Activated B cell treated with CpG ODN at 0.5 μM for 24 hours (primary cell): ENCODE measurements at regions of chr16 and their contacts with region 1.

Region 1: DNA sequence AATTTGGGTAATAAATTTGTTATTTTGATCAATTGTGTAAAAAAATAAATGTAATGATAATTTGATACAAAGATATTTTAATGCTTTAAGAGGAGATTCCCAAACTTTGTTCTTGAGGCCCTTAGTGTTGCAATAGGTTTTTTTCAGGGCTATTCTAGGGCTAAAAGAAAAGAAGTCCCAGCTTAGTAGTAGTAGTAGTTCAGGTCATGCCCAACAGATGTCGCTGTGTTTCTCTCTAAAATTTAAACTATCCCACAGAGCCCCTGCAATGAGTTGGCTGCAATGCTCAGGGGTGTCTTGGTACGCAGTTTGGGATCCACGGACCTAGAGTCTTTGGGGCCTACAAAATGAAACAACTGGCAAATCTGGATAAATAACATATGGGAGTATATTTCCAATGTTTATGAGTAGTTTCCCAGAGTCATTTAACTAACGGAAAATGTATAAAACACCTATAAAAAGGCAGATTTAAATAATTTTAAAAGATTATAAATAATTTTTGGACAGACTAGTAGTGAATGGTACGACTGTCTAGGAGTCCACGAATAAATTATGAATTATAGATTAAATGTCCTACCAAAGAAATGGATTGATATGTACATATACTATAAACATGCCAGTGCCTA is 228.4 kb upstream of the PMFBP1 start:
- DNase-seq: no peak
- ATAC-seq: peak; percentile 74
- H3K4me3 Mint-ChIP-seq: no peak overlapping the region
- H3K27ac Mint-ChIP-seq: no peak overlapping the region
- H3K4me1 Mint-ChIP-seq: peaks cover under 1% of the 10 kb centered on the region
- H3K27me3 Mint-ChIP-seq: no peaks in the 10 kb centered on the region
- CTCF ChIP-seq: no peak

Region 2: DNA sequence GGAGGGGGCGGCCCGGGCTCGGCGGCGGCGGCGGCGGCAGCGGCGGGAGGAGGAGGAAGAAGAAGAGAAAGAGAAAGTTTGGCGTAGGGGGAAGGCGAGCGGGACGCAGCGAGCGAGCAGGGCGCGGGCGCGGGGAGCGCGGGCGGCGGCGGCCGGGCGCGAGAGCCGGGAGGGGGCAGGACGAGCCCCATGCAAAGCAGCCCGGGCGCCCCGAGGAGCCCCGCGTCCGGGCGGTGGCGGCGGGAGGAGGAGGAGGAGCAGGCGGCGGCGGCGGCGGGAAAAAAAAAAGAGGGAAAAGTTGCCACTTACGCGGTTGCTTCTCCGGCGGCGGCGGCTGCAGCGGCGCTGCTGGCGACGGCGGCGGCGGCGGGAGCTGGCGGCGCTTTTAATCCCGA is 657.8 kb after region 1 on chr16:
- CTCF ChIA-PET with region 1: no interaction called
- POLR2A ChIA-PET with region 1: no interaction called
- intact Hi-C with region 1: loop called (anchors 10 kb)
- DNase-seq: peak; percentile 55
- ATAC-seq: peak; percentile 70
- H3K4me3 Mint-ChIP-seq: peak overlapping the region; percentile 88
- H3K27ac Mint-ChIP-seq: no peak overlapping the region
- H3K4me1 Mint-ChIP-seq: peaks cover 22% of the 10 kb centered on the region
- H3K27me3 Mint-ChIP-seq: peaks cover 33% of the 10 kb centered on the region
- CTCF ChIP-seq: no peak

Region 3: GRCh38 chr16:73196670-73197069 is 796.3 kb after region 1 on chr16:
- CTCF ChIA-PET with region 1: interaction called, 3 read pairs
- POLR2A ChIA-PET with region 1: no interaction called
- intact Hi-C with region 1: loop called (anchors 1 kb)
- DNase-seq: no peak
- ATAC-seq: peak; percentile 37
- H3K4me3 Mint-ChIP-seq: no peak overlapping the region
- H3K27ac Mint-ChIP-seq: no peak overlapping the region
- H3K4me1 Mint-ChIP-seq: no peaks in the 10 kb centered on the region
- H3K27me3 Mint-ChIP-seq: peaks cover 2% of the 10 kb centered on the region
- CTCF ChIP-seq: no peak

Region 4: GRCh38 chr16:73956587-73957494 is 1556.5 kb after region 1 on chr16:
- CTCF ChIA-PET with region 1: interaction called, 4 read pairs
- POLR2A ChIA-PET with region 1: no interaction called
- intact Hi-C with region 1: loop called (anchors 1 kb)
- DNase-seq: no peak
- ATAC-seq: no peak
- H3K4me3 Mint-ChIP-seq: no peak overlapping the region
- H3K27ac Mint-ChIP-seq: no peak overlapping the region
- H3K4me1 Mint-ChIP-seq: no peaks in the 10 kb centered on the region
- H3K27me3 Mint-ChIP-seq: no peaks in the 10 kb centered on the region
- CTCF ChIP-seq: peak; percentile 44